T-cell (primary cell): ENCODE measurements at regions of chr2 and their contacts with region 1.

Region 1: GRCh38 chr2:233075966-233076339 is 15.8 kb downstream of the INPP5D start:
- DNase-seq: peak in 13 of 35 experiments; percentile 34 to 74 (median 46)
- ATAC-seq: peak; percentile 69 to 86 (median 74)
- H3K4me3 ChIP-seq: peak overlapping the region; percentile 15 to 32
- H3K4me3 Mint-ChIP-seq: no peak overlapping the region
- H3K27ac ChIP-seq: peak overlapping the region; percentile 64
- H3K27ac Mint-ChIP-seq: no peak overlapping the region
- H3K4me1 ChIP-seq: peaks cover 60 to 77% of the 10 kb centered on the region in 2 experiments
- H3K4me1 Mint-ChIP-seq: peaks cover 31 to 47% (median 43%) of the 10 kb centered on the region in 3 donors
- H3K27me3 ChIP-seq: no peaks in the 10 kb centered on the region
- H3K27me3 Mint-ChIP-seq: no peaks in the 10 kb centered on the region

Region 2: GRCh38 chr2:232721882-232722281 is 354.1 kb before region 1 on chr2:
- CTCF ChIA-PET with region 1: no interaction called
- POLR2A ChIA-PET with region 1: no interaction called
- DNase-seq: no peak
- ATAC-seq: no peak
- H3K4me3 ChIP-seq: no peak overlapping the region
- H3K4me3 Mint-ChIP-seq: no peak overlapping the region
- H3K27ac ChIP-seq: no peak overlapping the region
- H3K27ac Mint-ChIP-seq: peak overlapping the region; percentile 13 to 64
- H3K4me1 ChIP-seq: peaks cover 5 to 9% of the 10 kb centered on the region in 2 experiments
- H3K4me1 Mint-ChIP-seq: peaks cover 41 to 43% (median 42%) of the 10 kb centered on the region in 3 donors
- H3K27me3 ChIP-seq: no peaks in the 10 kb centered on the region
- H3K27me3 Mint-ChIP-seq: no peaks in the 10 kb centered on the region

Region 3: GRCh38 chr2:233174137-233174536 is 98.2 kb after region 1 on chr2:
- CTCF ChIA-PET with region 1: interaction called in 1 of 2 experiments, 10 read pairs
- POLR2A ChIA-PET with region 1: interaction called in 1 of 2 experiments, 5 read pairs
- DNase-seq: no peak
- ATAC-seq: no peak
- H3K4me3 ChIP-seq: no peak overlapping the region
- H3K4me3 Mint-ChIP-seq: no peak overlapping the region
- H3K27ac ChIP-seq: no peak overlapping the region
- H3K27ac Mint-ChIP-seq: no peak overlapping the region
- H3K4me1 ChIP-seq: no peaks in the 10 kb centered on the region
- H3K4me1 Mint-ChIP-seq: peaks cover 0 to 12% (median under 1%) of the 10 kb centered on the region in 3 donors
- H3K27me3 ChIP-seq: no peaks in the 10 kb centered on the region
- H3K27me3 Mint-ChIP-seq: no peaks in the 10 kb centered on the region